ENCODE measurements at regions of chr16 and their contacts with region 1.

Region 1: GRCh38 chr16:2340564-2341455 is at the start of gene ABCA3:
- DNase-seq: peak; percentile 94
- H3K4me3 ChIP-seq: peak within 1 kb of the TSS; percentile 56
- H3K27ac ChIP-seq: no peak within 1 kb of the TSS
- H3K4me1 ChIP-seq: peaks cover 6% of the 10 kb centered on the region
- CTCF ChIP-seq: peak; percentile 96
- total RNA-seq, gene ABCA3: not detected in 2 replicates

Region 2: DNA sequence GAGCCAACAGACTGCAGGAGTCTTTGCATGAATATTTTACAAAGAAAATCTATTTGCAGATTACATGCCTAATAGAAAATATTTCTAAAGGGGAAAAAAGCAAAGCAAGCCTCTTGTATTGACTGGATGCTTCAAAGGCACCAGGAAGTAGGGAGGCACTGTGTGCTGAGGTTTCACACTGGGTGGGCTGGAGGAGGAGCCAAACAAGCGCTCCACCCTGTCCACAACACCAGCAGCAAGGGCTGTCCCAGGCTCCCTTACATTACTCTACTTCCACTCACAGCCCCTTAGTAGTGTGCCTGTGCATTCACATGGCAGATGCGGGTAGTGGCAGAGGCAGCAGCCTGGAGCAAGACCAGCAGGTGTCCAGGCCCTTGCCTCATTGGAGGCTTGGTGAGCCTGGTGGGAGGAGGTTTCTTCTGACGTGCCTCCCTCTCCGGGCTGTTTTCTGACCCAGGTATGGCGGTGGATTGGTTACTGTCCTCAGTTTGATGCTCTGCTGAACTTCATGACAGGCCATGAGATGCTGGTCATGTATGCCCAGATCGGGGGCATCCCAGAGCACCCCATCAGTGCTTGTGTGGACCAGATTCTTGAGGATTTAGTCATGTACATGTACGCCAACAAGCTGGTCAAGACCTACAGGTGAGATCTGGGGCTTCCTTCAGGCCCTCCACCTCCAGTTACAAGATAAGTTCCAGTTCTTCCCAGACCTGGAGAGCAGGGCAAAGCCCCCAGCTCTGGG is 81.5 kb after region 1 on chr16:
- CTCF ChIA-PET with region 1: no interaction called
- POLR2A ChIA-PET with region 1: no interaction called
- intact Hi-C with region 1: loop called (anchors 2 kb)
- DNase-seq: peak; percentile 31
- H3K4me3 ChIP-seq: no peak overlapping the region
- H3K27ac ChIP-seq: no peak overlapping the region
- H3K4me1 ChIP-seq: peaks cover 6% of the 10 kb centered on the region
- CTCF ChIP-seq: no peak

Region 3: DNA sequence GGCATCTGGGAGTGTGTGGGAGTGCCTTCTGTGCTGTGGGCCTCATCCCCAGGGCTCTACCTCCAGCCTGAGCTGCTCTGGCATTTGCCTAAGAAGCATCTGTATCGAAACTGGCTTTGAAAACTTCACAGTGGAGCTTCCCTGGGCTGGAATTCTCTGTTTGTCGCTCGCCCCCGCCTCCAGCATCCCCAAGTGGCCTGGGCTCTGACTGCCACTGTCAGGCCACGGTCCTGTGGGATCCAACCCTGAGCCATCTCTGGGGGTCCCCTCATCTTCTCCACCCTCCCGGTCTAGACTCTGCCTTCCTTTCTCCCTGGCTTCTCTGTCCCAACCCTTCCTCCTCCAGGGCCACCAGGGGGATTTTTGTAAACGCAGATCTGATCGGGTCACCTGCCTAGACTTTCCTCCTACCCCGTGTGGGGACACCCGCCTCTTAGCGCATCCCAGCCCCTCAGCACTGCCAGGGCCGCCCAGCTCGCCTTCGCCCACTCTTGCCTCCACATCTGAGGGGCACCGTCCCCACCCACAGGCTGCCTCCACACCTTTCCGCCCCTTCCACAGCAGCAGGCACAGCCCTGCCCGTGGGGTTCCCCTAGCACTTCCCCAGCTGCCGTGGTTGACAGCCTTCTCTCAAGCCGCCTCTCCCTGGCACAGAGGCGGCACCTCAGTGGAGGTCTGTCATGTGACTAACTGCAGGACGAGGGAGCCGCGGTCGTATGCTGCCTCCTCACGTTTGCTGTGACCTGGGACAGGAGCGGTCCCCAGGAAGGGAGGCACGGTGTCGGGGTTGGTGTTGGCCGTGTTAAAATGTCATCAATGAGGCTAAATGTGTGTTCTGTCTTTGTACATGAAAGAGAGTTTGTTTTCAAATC is 146.1 kb after region 1 on chr16:
- CTCF ChIA-PET with region 1: no interaction called
- POLR2A ChIA-PET with region 1: no interaction called
- intact Hi-C with region 1: loop called (anchors 5 kb)
- DNase-seq: peak; percentile 50
- H3K4me3 ChIP-seq: no peak overlapping the region
- H3K27ac ChIP-seq: no peak overlapping the region
- H3K4me1 ChIP-seq: peaks cover 6% of the 10 kb centered on the region
- CTCF ChIP-seq: peak; percentile 31; the same call in 1 of the 2 replicates

Region 4: GRCh38 chr16:2513405-2514322 is 172.9 kb after region 1 on chr16 and contains the start of gene ATP6V0C:
- CTCF ChIA-PET with region 1: no interaction called
- POLR2A ChIA-PET with region 1: no interaction called
- intact Hi-C with region 1: loop called (anchors 5 kb)
- DNase-seq: peak; percentile 95
- H3K4me3 ChIP-seq: peak within 1 kb of the TSS; percentile 99
- H3K27ac ChIP-seq: peak within 1 kb of the TSS; percentile 80
- H3K4me1 ChIP-seq: peaks cover 47% of the 10 kb centered on the region
- CTCF ChIP-seq: no peak
- total RNA-seq, gene ATP6V0C: 15.0 and 16.4 TPM in 2 replicates

Measured in OCI-LY7 (cell line).